ENCODE measurements at regions of chrX and their contacts with region 1.

Region 1: GRCh38 chrX:54999717-55000598 is at the start of gene APEX2:
- DNase-seq: peak; percentile 92
- ATAC-seq: peak; percentile 96
- H3K4me3 Mint-ChIP-seq: peak within 1 kb of the TSS; percentile 95
- H3K27ac Mint-ChIP-seq: peak within 1 kb of the TSS; percentile 93
- H3K4me1 Mint-ChIP-seq: peaks cover 20% of the 10 kb centered on the region
- H3K27me3 Mint-ChIP-seq: no peaks in the 10 kb centered on the region
- CTCF ChIP-seq: no peak
- total RNA-seq, gene APEX2: 30.0 to 33.0 TPM

Region 2: DNA sequence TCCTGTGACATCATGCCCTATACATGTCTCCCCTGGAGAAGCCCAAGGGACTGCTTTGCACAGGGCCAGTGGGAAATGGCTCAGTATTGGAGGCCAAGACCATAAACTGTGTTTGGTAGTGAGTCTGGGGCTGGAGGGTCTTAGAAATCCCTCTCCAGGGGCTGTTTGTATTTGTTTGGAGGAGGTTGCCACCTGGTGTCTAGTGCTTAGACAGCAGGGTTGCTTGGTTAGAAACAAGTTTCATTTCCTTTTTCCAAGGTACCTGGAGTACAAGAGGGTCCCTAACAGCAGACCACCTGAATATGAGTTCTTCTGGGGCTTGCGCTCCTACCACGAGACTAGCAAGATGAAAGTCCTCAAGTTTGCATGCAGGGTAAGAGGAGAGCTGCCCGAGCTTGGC is 72.5 kb before region 1 on chrX:
- CTCF ChIA-PET with region 1: no interaction called
- POLR2A ChIA-PET with region 1: no interaction called
- intact Hi-C with region 1: no loop called
- DNase-seq: no peak
- ATAC-seq: no peak
- H3K4me3 Mint-ChIP-seq: no peak overlapping the region
- H3K27ac Mint-ChIP-seq: no peak overlapping the region
- H3K4me1 Mint-ChIP-seq: no peaks in the 10 kb centered on the region
- H3K27me3 Mint-ChIP-seq: no peaks in the 10 kb centered on the region
- CTCF ChIP-seq: no peak

Region 3: DNA sequence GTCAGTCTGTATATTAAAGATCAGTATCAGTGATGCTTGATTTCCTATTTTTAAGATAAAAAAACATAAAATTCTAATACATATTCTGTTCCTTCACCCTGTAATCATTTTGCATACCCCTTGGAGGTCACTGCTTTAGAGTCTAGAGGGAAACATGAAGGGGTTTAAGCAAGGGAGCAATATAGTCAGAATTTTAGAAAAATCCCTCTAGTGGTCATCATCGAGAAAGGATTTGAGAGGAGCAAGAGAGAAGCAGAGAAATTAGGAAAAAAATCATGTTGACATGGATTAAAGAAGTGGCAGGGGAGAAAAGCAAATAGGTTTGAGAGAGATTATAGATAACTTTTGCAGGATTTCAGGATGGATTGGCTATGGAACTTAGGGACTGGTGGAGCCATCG is 11.3 kb after region 1 on chrX:
- CTCF ChIA-PET with region 1: interaction called, 12 read pairs
- POLR2A ChIA-PET with region 1: interaction called, 5 read pairs
- intact Hi-C with region 1: no loop called
- DNase-seq: no peak
- ATAC-seq: no peak
- H3K4me3 Mint-ChIP-seq: no peak overlapping the region
- H3K27ac Mint-ChIP-seq: no peak overlapping the region
- H3K4me1 Mint-ChIP-seq: peaks cover 19% of the 10 kb centered on the region
- H3K27me3 Mint-ChIP-seq: no peaks in the 10 kb centered on the region
- CTCF ChIP-seq: no peak

Region 4: DNA sequence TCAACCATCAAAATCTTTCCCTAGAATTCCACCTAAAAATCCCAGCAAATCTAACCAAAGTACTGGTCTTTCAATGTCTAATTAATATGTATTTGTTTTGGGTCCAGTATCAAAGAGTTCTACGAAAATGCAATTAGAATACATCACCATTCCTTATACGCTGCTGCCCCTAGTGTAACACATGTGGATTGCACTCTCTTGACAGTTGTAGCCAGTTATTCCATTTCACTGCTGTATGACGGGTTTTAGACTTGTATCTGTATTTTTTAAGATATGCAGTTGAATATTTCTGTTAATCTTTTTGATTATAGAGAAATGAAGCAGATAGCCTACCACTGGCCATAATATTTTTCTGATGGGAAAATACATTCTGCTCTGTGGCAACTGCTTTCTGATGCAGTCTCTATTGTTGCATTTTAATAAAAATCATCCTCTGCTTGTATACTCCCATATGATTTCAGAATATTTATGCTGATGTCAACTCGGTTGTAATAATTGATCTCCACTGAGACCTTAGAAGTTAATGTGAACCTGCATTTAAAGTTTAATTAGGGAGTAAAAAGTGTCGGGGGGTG is 57.8 kb after region 1 on chrX:
- CTCF ChIA-PET with region 1: interaction called, 11 read pairs
- POLR2A ChIA-PET with region 1: interaction called, 3 read pairs
- intact Hi-C with region 1: no loop called
- DNase-seq: peak; percentile 46
- ATAC-seq: peak; percentile 79
- H3K4me3 Mint-ChIP-seq: peak overlapping the region; percentile 43
- H3K27ac Mint-ChIP-seq: no peak overlapping the region
- H3K4me1 Mint-ChIP-seq: peaks cover 12% of the 10 kb centered on the region
- H3K27me3 Mint-ChIP-seq: no peaks in the 10 kb centered on the region
- CTCF ChIP-seq: peak; percentile 77

Region 5: GRCh38 chrX:55109306-55109705 is 109.3 kb after region 1 on chrX:
- CTCF ChIA-PET with region 1: no interaction called
- POLR2A ChIA-PET with region 1: no interaction called
- intact Hi-C with region 1: no loop called
- DNase-seq: no peak
- ATAC-seq: no peak
- H3K4me3 Mint-ChIP-seq: no peak overlapping the region
- H3K27ac Mint-ChIP-seq: no peak overlapping the region
- H3K4me1 Mint-ChIP-seq: no peaks in the 10 kb centered on the region
- H3K27me3 Mint-ChIP-seq: no peaks in the 10 kb centered on the region
- CTCF ChIP-seq: no peak

Region 6: DNA sequence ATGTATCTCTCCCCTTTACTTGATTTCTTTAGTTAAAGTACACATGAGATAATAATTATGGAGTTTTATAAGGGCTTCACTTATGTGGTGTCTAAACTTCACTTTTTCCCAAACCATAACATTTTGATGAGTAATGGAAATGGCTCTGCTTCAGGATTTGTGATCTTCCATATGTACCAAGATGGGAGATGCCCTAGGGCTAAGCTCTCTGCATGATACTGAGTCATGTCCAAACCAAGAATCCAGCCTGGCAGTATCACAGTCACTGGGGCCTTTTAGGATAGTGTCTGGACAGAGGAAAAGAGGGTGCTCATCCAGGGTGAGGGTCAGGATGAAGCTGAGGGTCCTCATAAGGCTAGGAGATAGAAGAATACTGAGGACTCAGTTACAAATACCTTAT is 312.7 kb after region 1 on chrX:
- CTCF ChIA-PET with region 1: no interaction called
- POLR2A ChIA-PET with region 1: no interaction called
- intact Hi-C with region 1: no loop called
- DNase-seq: no peak
- ATAC-seq: no peak
- H3K4me3 Mint-ChIP-seq: no peak overlapping the region
- H3K27ac Mint-ChIP-seq: no peak overlapping the region
- H3K4me1 Mint-ChIP-seq: no peaks in the 10 kb centered on the region
- H3K27me3 Mint-ChIP-seq: no peaks in the 10 kb centered on the region
- CTCF ChIP-seq: no peak